HEK293 (cell line): ENCODE measurements at regions of chr7 and their contacts with region 1.

Region 1: GRCh38 chr7:104848138-104848990 is 165.6 kb upstream of the KMT2E start:
- H3K4me3 ChIP-seq: no peak overlapping the region
- H3K27ac ChIP-seq: no peak overlapping the region
- H3K4me1 ChIP-seq: no peaks in the 10 kb centered on the region
- CTCF ChIP-seq: peak; percentile 65; the same call in 1 of the 2 replicates

Region 2: GRCh38 chr7:104231054-104232046 is 617.0 kb before region 1 on chr7:
- CTCF ChIA-PET with region 1: interaction called, 30 read pairs
- POLR2A ChIA-PET with region 1: no interaction called
- H3K4me3 ChIP-seq: no peak overlapping the region
- H3K27ac ChIP-seq: no peak overlapping the region
- H3K4me1 ChIP-seq: no peaks in the 10 kb centered on the region
- CTCF ChIP-seq: peak; percentile 50; the same call in 1 of the 2 replicates

Region 3: GRCh38 chr7:104643587-104644217 is 204.7 kb before region 1 on chr7:
- CTCF ChIA-PET with region 1: interaction called, 42 read pairs
- POLR2A ChIA-PET with region 1: no interaction called
- H3K4me3 ChIP-seq: no peak overlapping the region
- H3K27ac ChIP-seq: no peak overlapping the region
- H3K4me1 ChIP-seq: no peaks in the 10 kb centered on the region
- CTCF ChIP-seq: no peak

Region 4: DNA sequence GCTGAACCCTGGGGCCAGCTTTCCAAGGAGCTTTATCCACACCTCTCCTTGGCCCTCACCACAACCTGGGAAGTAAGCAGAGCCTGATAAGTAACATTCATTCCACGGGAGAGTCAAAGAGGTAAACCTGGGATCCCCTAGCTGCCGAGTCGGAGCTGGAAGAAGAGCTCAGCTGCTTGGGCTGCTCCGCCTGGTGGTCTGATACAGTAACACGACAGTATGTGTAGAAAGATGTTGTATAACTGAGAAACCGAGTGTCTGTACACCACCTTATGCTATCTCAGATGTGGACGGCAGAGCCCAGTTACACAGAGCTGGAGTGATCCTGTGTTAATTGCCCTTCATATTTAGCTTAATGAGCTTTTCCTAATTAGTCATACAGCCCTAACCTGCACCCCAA is 14.4 kb after region 1 on chr7:
- CTCF ChIA-PET with region 1: interaction called, 13 read pairs
- POLR2A ChIA-PET with region 1: no interaction called
- H3K4me3 ChIP-seq: no peak overlapping the region
- H3K27ac ChIP-seq: no peak overlapping the region
- H3K4me1 ChIP-seq: no peaks in the 10 kb centered on the region
- CTCF ChIP-seq: peak; percentile 64